ENCODE measurements at regions of chr2 and their contacts with region 1.

Region 1: GRCh38 chr2:237572021-237572741 is 5.8 kb downstream of the PRLH start:
- DNase-seq: peak; percentile 86 to 93
- ATAC-seq: peak; percentile 91

Region 2: GRCh38 chr2:237512774-237513466 is 59.3 kb before region 1 on chr2:
- intact Hi-C with region 1: loop called (anchors 2 to 5 kb)
- DNase-seq: peak; percentile 72 to 92
- ATAC-seq: peak; percentile 69